Ovary (tissue), 10 donors: ENCODE measurements at regions of chr21 and their contacts with region 1.

Region 1: GRCh38 chr21:44939532-44940115 is at the start of gene SLX9:
- DNase-seq: peak; percentile 64 to 86 (median 75)
- H3K4me3 ChIP-seq: peak within 1 kb of the TSS; percentile 82
- H3K27ac ChIP-seq: peak within 1 kb of the TSS in 1 of 2 donors; percentile 6
- H3K4me1 ChIP-seq: peaks cover 7% of the 10 kb centered on the region
- H3K27me3 ChIP-seq: no peaks in the 10 kb centered on the region
- CTCF ChIP-seq: no peak
- EP300 ChIP-seq: no peak
- POLR2A ChIP-seq: peak; percentile 67
- total RNA-seq, gene SLX9: 5.6 to 24.1 (median 17.2) TPM

Region 2: DNA sequence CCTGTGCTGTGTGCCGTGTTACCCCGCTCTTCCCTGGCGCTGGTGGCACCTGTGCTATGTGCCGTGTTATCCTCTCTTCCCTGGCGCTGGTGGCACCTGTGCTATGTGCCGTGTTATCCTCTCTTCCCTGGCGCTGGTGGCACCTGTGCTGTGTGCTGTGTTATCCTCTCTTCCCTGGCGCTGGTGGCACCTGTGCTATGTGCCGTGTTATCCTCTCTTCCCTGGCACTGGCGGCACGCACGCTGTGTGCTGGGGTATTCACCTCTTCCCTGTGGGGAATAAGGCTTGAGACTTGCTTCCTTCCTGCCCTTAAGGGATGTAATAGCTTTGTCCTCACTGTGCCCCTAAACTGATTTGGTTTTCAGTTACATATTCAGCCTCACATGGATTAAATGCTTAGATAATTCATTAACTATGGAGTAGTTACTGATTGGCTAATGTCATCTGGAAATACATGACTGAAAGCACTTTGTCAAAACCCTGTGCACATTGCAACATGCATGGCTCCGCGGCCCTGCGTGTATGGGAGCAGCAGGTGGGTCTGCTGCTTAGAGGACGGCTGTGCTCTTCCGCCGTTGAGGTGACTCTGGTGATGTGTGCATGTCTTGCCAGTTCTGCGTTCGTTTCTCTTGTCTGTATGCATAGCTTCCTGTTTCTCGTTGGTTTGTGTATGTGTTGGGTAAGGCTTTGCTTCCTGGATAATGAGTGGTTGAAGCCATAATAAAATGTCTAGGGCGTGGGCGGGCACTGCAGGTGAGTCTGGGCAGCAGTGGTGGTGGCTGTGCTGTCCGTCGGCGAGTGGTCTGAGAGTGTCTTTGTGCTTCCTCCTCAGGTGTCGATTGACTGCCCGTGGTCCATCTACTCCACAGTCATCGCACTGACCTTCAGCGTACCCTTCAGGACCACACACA is 850.4 kb before region 1 on chr21:
- intact Hi-C with region 1: no loop called
- DNase-seq: no peak
- H3K4me3 ChIP-seq: no peak overlapping the region
- H3K27ac ChIP-seq: no peak overlapping the region
- H3K4me1 ChIP-seq: no peaks in the 10 kb centered on the region
- H3K27me3 ChIP-seq: no peaks in the 10 kb centered on the region
- CTCF ChIP-seq: no peak
- EP300 ChIP-seq: no peak
- POLR2A ChIP-seq: no peak

Region 3: GRCh38 chr21:44792702-44793591 is 146.7 kb before region 1 on chr21:
- intact Hi-C with region 1: loop called in 1 of 4 experiments (anchors 5 kb)
- DNase-seq: peak; percentile 31 to 57 (median 52)
- H3K4me3 ChIP-seq: no peak overlapping the region
- H3K27ac ChIP-seq: no peak overlapping the region
- H3K4me1 ChIP-seq: peaks cover 3% of the 10 kb centered on the region
- H3K27me3 ChIP-seq: no peaks in the 10 kb centered on the region
- CTCF ChIP-seq: peak; percentile 33 to 57 (median 52)
- EP300 ChIP-seq: no peak
- POLR2A ChIP-seq: no peak

Region 4: GRCh38 chr21:44817506-44817880 is 122.1 kb before region 1 on chr21:
- intact Hi-C with region 1: loop called in 1 of 4 experiments (anchors 10 kb)
- DNase-seq: peak; percentile 92 to 96 (median 94)
- H3K4me3 ChIP-seq: peak overlapping the region; percentile 59
- H3K27ac ChIP-seq: peak overlapping the region in 1 of 2 donors; percentile 93
- H3K4me1 ChIP-seq: peaks cover 14% of the 10 kb centered on the region
- H3K27me3 ChIP-seq: no peaks in the 10 kb centered on the region
- CTCF ChIP-seq: no peak
- EP300 ChIP-seq: no peak
- POLR2A ChIP-seq: no peak

Region 5: GRCh38 chr21:44873356-44874239 is 66.0 kb before region 1 on chr21 and contains the start of gene PTTG1IP:
- intact Hi-C with region 1: loop called in 1 of 4 experiments (anchors 5 kb)
- DNase-seq: peak; percentile 98 to 99 (median 99)
- H3K4me3 ChIP-seq: peak within 1 kb of the TSS; percentile 60
- H3K27ac ChIP-seq: peak within 1 kb of the TSS; percentile 71 to 85
- H3K4me1 ChIP-seq: peaks cover 16% of the 10 kb centered on the region
- H3K27me3 ChIP-seq: no peaks in the 10 kb centered on the region
- CTCF ChIP-seq: no peak
- EP300 ChIP-seq: no peak
- POLR2A ChIP-seq: peak; percentile 63
- total RNA-seq, gene PTTG1IP: 133 to 226 (median 143) TPM

Region 6: DNA sequence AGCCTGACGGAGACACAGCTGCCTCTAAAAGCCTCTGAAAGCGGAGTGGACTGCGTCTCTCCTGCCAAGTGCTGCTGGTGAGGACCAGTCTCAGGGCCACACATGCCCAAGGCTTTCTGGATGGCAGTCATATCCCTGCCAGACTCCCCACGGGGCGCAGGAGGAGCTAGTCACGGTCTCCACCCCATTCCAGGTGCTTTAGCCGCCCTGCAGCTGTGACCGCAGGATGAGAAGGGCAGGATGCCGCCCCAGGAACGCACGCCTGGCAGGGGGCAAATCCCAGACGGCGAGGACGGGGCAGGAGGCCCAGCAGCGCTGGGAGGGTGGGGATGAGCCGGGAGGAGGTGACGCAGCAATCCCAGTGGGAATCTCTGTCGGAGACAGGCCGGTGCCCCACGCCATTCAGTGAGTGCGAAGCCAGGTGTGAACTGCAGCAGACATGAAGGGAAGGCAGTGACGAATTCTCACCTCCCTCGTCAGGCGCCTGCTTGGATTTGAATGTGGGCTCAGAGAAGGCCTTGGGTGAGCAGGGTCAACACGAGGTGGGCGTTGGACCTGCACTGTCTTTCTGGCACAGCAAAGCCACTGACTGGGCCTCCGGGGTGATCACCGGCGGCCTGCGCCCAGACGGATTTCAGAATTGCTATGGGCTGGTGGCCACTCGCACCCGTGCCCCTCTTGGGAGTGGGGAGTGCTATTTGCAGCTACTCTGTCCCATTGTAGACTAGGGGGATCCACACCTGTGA is 641.1 kb after region 1 on chr21:
- intact Hi-C with region 1: loop called in 1 of 4 experiments (anchors 5 kb)
- DNase-seq: peak in 1 of 5 donors; percentile 11
- H3K4me3 ChIP-seq: no peak overlapping the region
- H3K27ac ChIP-seq: no peak overlapping the region
- H3K4me1 ChIP-seq: no peaks in the 10 kb centered on the region
- H3K27me3 ChIP-seq: no peaks in the 10 kb centered on the region
- CTCF ChIP-seq: no peak
- EP300 ChIP-seq: no peak
- POLR2A ChIP-seq: no peak